Left ventricle myocardium inferior (tissue), 1 donor: ENCODE measurements at regions of chr15 and their contacts with region 1.

Region 1: GRCh38 chr15:63553388-63553791 is 43.8 kb upstream of the FBXL22 start:
- DNase-seq: no peak
- H3K4me3 ChIP-seq: peak overlapping the region; percentile 14
- H3K27ac ChIP-seq: peak overlapping the region; percentile 67
- H3K4me1 ChIP-seq: peaks cover 33% of the 10 kb centered on the region
- H3K27me3 ChIP-seq: no peaks in the 10 kb centered on the region
- CTCF ChIP-seq: no peak

Region 2: DNA sequence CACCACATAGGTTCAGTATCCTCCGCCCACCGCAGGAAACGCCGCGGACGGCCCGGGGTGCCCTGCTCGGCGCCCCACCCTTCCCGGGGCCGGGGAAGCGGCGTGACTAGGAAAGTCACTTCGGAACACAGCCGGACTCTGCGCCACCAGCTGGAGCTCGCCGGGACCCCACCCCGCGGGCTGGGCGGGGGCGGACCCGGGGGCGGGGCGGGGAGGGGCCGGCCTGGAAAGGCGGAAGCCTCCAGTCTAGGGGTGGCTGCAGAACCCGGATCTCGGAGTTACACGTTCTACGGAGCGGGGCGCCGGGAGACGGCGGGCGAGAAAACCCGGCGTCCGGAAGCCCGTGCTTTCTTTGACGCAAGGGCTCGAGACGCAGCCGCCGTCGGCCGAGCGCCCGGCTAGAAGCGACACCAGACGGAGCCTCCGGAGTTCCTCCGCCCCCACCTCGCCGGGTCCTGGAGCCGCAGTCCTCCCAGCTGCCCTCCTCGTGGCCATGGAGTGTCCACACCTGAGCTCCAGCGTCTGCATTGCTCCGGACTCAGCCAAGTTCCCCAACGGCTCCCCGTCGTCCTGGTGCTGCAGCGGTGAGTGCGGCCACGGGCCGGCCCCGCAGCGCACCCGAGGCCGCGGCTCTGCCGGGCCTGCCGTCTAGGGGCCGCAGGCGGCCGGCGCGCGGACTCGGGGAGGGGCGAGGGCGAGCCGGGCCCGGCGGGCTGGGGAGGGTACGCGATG is 49.0 kb before region 1 on chr15 and contains the start of gene USP3:
- intact Hi-C with region 1: loop called (anchors 10 kb)
- DNase-seq: peak; percentile 95
- H3K4me3 ChIP-seq: peak within 1 kb of the TSS; percentile 83
- H3K27ac ChIP-seq: peak within 1 kb of the TSS; percentile 99
- H3K4me1 ChIP-seq: peaks cover 82% of the 10 kb centered on the region
- H3K27me3 ChIP-seq: no peaks in the 10 kb centered on the region
- CTCF ChIP-seq: peak; percentile 63
- total RNA-seq, gene USP3: 17.2 TPM

Region 3: DNA sequence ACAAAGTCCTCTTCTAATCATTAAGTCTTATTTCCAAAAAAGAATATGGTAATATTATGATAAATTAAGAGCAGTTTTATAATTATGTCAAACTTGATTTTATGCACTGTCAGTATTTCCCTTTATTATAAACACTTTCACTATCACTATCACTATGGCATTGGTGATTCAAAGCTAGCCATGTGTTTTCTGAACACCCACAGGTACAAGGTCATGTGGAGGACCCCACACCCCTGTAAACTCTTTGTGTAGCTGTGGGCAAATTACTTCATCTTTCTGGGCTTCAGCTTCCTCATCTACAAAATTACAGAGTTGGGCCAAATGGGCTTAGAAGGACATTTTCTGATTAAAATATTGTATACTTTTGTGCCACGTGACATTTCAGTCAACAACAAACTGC is 85.4 kb after region 1 on chr15:
- intact Hi-C with region 1: no loop called
- DNase-seq: no peak
- H3K4me3 ChIP-seq: no peak overlapping the region
- H3K27ac ChIP-seq: no peak overlapping the region
- H3K4me1 ChIP-seq: no peaks in the 10 kb centered on the region
- H3K27me3 ChIP-seq: no peaks in the 10 kb centered on the region
- CTCF ChIP-seq: no peak